Transverse colon (tissue), 4 donors: ENCODE measurements at regions of chr4 and their contacts with region 1.

Region 1: DNA sequence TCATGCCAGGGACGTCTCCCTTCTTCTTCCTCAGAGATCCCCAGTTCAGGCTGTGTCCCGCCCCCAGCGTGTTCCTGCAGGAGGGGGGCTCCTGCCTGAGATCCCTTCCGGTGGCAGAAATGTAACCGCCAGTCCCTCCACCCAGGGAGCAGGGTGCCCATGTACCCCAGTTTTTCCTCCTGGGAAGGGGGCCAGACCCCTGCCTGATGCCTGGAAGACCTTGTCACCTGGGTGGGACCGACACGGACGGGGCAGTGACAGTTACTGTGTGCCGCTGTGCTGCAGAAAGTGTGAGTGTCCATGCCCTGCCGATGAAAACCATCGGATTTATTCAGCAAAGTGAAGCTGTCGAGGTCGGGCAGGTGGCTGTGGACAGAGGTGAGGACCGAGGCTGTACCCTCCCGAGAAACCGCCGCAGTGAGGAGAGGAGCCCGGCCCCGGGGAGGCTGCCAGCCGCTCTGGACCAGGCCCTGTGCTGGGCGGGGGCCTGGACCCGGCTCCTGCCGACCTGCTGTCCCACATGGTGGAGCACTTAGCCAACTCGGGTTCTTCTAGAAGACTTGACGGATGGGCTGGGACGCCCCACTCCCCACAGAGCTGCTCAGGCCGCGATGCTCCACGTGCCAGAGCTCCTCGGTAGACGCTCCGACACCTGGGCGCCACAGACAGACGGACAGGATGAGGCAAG is 36.7 kb upstream of the HMX1 start:
- DNase-seq: peak; percentile 4
- H3K4me3 ChIP-seq: no peak overlapping the region
- H3K27ac ChIP-seq: no peak overlapping the region
- H3K4me1 ChIP-seq: no peaks in the 10 kb centered on the region
- H3K27me3 ChIP-seq: peaks cover 14% of the 10 kb centered on the region
- CTCF ChIP-seq: no peak
- EP300 ChIP-seq: no peak
- POLR2A ChIP-seq: no peak

Region 2: DNA sequence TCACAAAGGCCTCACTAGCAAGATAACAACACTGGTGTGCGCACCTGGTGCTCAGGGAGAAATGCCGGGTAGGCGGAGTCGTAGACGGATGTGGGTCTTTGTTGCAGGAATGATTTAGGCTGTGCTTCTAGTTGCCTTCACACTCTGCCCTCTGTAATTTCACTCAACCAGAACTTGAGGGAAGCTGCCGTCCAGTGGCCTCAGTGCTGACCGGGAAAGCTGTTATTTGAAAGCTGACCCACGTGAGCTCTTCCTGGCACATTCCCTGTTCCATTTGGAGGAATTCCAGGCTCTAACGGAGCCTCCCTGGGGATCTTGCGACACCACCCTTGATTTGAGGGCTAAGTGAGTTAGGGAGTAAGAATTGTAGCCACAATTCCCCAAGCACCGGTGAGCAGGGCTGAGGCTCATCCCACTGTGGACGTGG is 693.3 kb before region 1 on chr4:
- in situ Hi-C with region 1: no loop called
- intact Hi-C with region 1: loop called (anchors 5 kb)
- DNase-seq: no peak
- H3K4me3 ChIP-seq: no peak overlapping the region
- H3K27ac ChIP-seq: no peak overlapping the region
- H3K4me1 ChIP-seq: no peaks in the 10 kb centered on the region
- H3K27me3 ChIP-seq: no peaks in the 10 kb centered on the region
- CTCF ChIP-seq: no peak
- EP300 ChIP-seq: no peak
- POLR2A ChIP-seq: no peak

Region 3: DNA sequence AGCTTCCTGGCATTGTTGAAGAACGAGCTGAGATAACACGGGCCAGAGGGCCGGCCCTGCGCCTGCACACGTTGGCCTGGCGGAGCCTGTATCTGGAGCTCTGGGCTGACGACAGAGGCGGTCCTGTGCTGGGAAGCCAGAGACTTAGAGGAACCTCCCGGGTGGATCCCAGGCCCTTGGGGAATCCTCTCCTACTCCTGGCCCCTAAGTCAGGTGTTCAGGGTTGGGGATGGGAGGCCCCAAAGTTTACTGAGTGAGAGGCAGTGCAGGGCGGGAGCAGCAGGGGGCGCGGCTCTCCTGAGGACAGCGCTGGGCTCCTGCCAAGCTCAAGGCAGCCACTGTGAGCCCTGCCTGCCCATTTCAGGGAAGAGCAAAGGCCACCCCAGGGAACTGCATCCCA is 641.3 kb before region 1 on chr4:
- in situ Hi-C with region 1: no loop called
- intact Hi-C with region 1: no loop called
- DNase-seq: peak; percentile 67
- H3K4me3 ChIP-seq: no peak overlapping the region
- H3K27ac ChIP-seq: peak overlapping the region in 1 of 4 donors; percentile 23
- H3K4me1 ChIP-seq: peaks cover 3 to 20% (median 10%) of the 10 kb centered on the region in 4 donors
- H3K27me3 ChIP-seq: peaks cover 28% of the 10 kb centered on the region
- CTCF ChIP-seq: peak; percentile 60 to 68 (median 64)
- EP300 ChIP-seq: no peak
- POLR2A ChIP-seq: no peak